ENCODE measurements at regions of chr19 and their contacts with region 1.

Region 1: GRCh38 chr19:38952395-38953165 is 21.8 kb downstream of the MRPS12 start:
- DNase-seq: peak in 1 of 2 donors; percentile 66
- ATAC-seq: peak; percentile 37 to 40 (median 39)
- H3K4me3 ChIP-seq: no peak overlapping the region
- H3K4me3 Mint-ChIP-seq: peak overlapping the region; percentile 6
- H3K27ac ChIP-seq: no peak overlapping the region
- H3K27ac Mint-ChIP-seq: peak overlapping the region in 1 of 2 donors; percentile 18
- H3K4me1 ChIP-seq: peaks cover 18% of the 10 kb centered on the region
- H3K4me1 Mint-ChIP-seq: peaks cover 6 to 20% of the 10 kb centered on the region in 2 donors
- H3K27me3 ChIP-seq: peaks cover 2% of the 10 kb centered on the region
- H3K27me3 Mint-ChIP-seq: peaks cover 8 to 13% of the 10 kb centered on the region in 2 donors
- CTCF ChIP-seq: peak; percentile 52

Region 2: DNA sequence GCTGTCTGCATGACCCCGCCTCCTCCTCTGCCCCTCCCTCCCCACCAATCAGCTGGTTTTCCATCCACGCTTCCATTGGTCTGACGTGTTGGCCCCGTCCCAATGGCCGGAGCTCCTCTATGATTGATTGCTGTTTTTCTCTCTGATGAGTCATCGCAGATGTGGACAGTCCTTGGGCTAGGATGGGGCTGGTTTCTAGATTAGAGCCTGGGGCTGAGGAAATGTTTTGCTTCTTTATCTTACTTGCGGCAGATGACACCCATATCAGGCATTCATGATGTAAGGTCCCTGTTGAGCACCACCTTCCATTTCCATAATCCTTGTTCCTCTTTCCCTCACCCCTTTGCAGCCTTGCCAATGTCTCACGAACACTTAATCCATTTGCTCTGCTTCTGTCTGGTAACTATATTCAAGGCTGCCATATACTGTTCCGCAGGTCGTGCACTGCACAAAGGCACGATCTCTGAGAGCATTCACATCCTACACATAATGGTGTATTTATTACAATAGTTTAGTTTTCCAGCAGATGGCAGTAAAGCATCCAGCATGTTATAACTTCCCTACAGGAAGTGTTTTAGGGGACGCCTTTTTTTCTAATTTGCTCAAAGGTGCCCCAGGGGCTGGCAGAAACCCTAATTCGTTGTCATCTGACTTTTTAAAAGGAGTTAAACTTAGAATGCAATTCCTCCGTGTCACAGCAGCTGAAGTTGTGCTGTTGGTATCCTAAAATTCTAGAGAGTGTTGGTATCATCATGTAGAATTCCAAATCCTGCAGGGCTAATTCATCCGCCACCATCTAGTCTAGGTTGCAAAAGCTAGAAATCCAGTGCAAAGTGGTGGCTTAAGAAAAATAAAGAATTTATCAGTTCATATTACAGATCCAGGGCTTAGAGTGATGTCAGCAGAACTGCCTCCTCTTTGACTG is 408.3 kb before region 1 on chr19:
- intact Hi-C with region 1: loop called (anchors 1 kb)
- DNase-seq: peak in 1 of 2 donors; percentile 78
- ATAC-seq: peak; percentile 77 to 85 (median 84)
- H3K4me3 ChIP-seq: no peak overlapping the region
- H3K4me3 Mint-ChIP-seq: peak overlapping the region; percentile 43
- H3K27ac ChIP-seq: no peak overlapping the region
- H3K27ac Mint-ChIP-seq: peak overlapping the region in 1 of 2 donors; percentile 5
- H3K4me1 ChIP-seq: peaks cover 14% of the 10 kb centered on the region
- H3K4me1 Mint-ChIP-seq: peaks cover 7 to 11% of the 10 kb centered on the region in 2 donors
- H3K27me3 ChIP-seq: no peaks in the 10 kb centered on the region
- H3K27me3 Mint-ChIP-seq: peaks cover 0 to 3% of the 10 kb centered on the region in 2 donors
- CTCF ChIP-seq: peak; percentile 66

Region 3: GRCh38 chr19:38932425-38933179 is 20.0 kb before region 1 on chr19:
- intact Hi-C with region 1: no loop called
- DNase-seq: peak in 1 of 2 donors; percentile 71
- ATAC-seq: no peak
- H3K4me3 ChIP-seq: no peak overlapping the region
- H3K4me3 Mint-ChIP-seq: peak overlapping the region; percentile 59
- H3K27ac ChIP-seq: no peak overlapping the region
- H3K27ac Mint-ChIP-seq: peak overlapping the region; percentile 91 to 99
- H3K4me1 ChIP-seq: peaks cover 38% of the 10 kb centered on the region
- H3K4me1 Mint-ChIP-seq: peaks cover 44 to 52% of the 10 kb centered on the region in 2 donors
- H3K27me3 ChIP-seq: no peaks in the 10 kb centered on the region
- H3K27me3 Mint-ChIP-seq: no peaks in the 10 kb centered on the region
- CTCF ChIP-seq: peak; percentile 47

Measured in natural killer cell (primary cell).